ENCODE measurements at regions of chr14 and their contacts with region 1.

Region 1: GRCh38 chr14:44897045-44897844 is 64.5 kb downstream of the KLHL28 start:
- DNase-seq: peak; percentile 98 to 99
- ATAC-seq: peak; percentile 98
- H3K4me3 ChIP-seq: peak overlapping the region; percentile 69 to 89
- H3K27ac ChIP-seq: peak overlapping the region; percentile 91 to 92
- H3K4me1 ChIP-seq: peaks cover 0 to 2% of the 10 kb centered on the region in 2 donors
- H3K27me3 ChIP-seq: no peaks in the 10 kb centered on the region

Region 2: DNA sequence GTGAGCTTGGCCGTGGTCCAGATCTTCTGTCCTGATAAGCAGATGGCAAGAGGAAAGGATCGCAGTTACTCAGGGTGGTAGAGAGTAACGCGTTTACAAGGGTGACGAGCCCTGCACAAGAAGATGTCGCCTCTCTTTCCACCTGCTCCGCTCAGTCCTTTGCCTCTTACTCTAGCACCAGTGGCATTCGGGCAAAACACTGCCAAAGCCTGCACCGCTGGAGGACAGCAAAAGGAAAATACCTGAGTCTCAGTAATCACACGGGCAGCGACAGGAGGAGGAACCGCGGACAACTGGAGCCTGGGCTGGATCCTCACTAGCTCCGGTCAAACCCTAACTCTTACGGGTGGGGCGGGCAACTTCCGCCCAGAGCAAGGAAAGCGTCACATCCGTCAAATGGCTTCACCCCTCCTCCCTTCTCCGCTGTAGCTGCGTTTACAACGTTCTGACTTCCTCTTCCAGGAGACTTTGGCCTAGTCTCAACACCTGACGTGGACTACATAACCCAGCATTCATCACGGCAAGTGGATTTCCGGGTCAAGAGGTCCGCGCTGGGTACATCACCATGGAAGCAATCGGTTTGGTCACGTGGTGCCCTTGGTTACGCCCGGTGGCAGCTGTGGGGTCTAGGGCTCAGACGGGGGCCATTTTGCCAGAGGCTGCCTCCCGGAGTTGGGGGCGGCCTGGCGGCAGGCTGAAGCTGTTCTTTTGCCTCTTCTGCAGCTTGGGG is 64.5 kb after region 1 on chr14 and contains the starts of genes KLHL28 and TOGARAM1:
- intact Hi-C with region 1: loop called (anchors 2 to 5 kb)
- DNase-seq: peak; percentile 97 to 98
- ATAC-seq: peak; percentile 99
- H3K4me3 ChIP-seq: peak within 1 kb of the TSS; percentile 83 to 87
- H3K27ac ChIP-seq: peak within 1 kb of the TSS in 1 of 2 donors; percentile 88
- H3K4me1 ChIP-seq: peaks cover 5 to 6% of the 10 kb centered on the region in 2 donors
- H3K27me3 ChIP-seq: no peaks in the 10 kb centered on the region
- total RNA-seq, gene KLHL28: 17.3 to 18.8 TPM
- total RNA-seq, gene TOGARAM1: 12.4 to 21.4 TPM

Region 3: DNA sequence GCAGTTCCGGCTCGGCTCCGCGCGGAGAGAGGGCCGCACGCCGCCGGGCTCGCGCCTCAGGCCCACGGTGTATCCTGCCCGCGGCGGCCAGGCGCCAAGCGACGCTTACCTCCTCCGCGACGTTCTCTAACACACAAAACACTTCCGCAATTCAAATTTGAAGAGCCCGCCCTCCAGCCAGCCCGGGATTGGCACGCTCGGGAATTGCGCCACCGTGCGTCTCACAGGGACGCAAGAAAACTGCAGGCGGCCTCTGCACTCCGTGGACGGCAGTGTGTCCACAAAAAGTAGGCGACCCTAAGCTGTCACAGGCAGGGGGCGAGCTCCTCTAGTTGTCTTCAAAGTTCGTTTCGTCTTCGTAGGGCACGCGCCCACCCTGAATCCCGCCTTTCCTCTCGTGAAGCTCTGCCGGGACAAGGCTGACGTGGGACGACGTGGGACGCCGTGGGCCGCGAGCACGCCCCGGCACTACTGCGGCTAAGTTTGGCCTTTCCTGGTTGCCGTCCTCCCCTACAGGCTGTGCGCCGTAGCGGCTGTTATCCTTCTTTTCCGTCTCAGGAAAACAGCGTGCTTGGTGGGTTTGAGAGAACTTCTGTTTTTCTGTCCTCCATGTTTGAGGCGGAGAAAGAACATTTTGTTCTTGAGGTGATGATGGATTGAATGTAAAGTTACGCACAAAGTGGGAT is 356.0 kb after region 1 on chr14 and contains the start of gene MIS18BP1:
- intact Hi-C with region 1: loop called (anchors 5 kb)
- DNase-seq: peak; percentile 97 to 98
- ATAC-seq: peak; percentile 98
- H3K4me3 ChIP-seq: peak within 1 kb of the TSS; percentile 79 to 83
- H3K27ac ChIP-seq: peak within 1 kb of the TSS; percentile 43 to 91
- H3K4me1 ChIP-seq: no peaks in the 10 kb centered on the region
- H3K27me3 ChIP-seq: no peaks in the 10 kb centered on the region
- total RNA-seq, gene MIS18BP1: 15.5 to 31.4 TPM